HEK293T (cell line): ENCODE measurements at regions of chrX and their contacts with region 1.

Region 1: DNA sequence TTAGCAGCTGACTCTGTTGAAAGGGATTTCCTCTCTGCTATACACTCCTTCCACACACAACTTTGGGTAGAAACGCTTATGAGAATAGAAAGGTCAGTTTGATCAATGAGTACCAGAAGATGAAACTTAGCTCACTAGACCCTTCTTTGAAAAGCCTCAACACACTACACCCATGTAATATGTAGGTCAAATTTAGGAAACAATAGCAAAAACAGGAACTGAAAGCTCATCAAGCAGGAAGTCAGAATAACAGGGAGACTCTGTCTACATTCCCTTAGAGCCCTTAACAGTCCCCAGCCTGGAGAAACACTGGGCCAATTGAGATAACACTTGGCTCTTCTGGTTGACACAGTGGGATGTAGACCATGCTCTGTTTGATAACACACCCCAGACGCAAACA is 30.7 kb downstream of the SRPX2 start:
- DNase-seq: no peak

Region 2: DNA sequence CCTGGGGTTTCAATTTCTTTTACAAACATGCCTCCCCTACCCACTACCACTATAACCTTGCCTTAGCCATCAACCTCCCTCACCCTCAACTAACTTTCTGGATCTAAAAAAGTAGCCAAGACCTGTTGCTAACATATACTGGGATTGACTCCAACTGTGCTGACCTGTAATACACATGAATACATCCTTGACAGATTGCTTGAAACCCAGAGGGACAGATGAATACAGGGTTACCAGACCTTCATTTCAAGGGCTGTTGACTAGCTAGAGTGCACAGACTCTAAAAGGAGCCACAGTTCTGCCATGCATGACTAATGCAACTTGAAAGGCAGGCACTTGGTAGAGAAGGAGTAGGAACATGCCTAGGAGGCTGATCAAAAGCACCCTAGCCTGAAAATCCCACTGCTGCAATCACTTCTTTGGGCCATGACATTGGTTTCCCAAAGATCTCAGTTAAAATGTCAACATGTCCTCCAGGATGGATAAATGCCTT is 385.6 kb before region 1 on chrX:
- CTCF ChIA-PET with region 1: no interaction called
- POLR2A ChIA-PET with region 1: no interaction called
- DNase-seq: no peak

Region 3: DNA sequence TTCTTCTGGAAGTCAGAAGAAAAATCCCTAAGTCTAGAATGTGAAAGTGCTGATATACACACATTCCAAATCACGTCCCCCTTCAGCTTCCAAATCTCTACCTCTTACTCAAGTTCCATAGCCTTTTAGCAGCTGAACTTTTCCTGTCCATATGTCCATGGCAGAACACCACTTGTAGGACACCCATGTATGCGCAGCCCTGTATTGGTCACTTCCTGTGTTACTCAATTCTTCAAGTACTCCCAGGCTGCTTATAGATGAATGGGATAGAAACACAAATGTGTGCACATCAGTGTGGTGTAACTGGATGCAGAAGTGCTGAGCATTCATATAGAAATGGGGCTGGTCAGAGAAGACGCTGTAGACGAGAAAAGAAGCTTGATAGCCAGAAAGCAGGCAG is 11.9 kb before region 1 on chrX:
- CTCF ChIA-PET with region 1: interaction called, 11 read pairs
- POLR2A ChIA-PET with region 1: no interaction called
- DNase-seq: no peak

Region 4: DNA sequence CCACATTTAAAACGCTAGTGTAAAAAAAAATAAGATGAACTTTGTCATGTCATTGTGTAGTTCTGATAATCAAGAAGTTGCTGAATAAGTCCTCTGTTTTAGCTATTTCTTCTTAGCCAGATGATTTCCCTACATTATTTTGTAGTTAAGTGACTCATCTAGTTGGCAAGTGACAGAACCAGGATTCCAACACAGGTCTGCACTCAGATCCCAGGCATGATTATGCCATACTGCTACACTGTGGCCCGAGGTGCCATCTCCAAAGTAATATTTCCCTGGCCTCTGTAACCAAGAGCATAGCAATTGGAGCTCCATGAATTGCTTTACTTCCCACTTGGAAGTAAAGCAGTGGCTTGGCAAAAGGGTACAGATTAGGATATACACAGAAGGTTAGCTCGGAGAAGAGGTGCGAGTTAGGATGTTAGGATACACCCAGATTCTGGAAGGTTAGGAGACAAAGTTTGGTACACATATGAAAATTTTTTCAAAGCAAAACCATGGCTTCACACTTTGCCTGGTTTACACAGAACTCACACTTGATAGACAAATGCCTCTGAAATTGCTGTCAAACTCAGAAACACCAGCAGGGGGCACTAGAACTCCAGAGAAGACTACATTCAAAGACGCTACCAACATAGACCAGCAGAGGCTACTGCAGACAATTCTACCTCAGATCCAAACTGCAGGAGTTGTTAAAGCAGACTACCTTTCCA is 10.7 kb after region 1 on chrX:
- CTCF ChIA-PET with region 1: interaction called, 12 read pairs
- POLR2A ChIA-PET with region 1: no interaction called
- DNase-seq: peak; percentile 84

Region 5: DNA sequence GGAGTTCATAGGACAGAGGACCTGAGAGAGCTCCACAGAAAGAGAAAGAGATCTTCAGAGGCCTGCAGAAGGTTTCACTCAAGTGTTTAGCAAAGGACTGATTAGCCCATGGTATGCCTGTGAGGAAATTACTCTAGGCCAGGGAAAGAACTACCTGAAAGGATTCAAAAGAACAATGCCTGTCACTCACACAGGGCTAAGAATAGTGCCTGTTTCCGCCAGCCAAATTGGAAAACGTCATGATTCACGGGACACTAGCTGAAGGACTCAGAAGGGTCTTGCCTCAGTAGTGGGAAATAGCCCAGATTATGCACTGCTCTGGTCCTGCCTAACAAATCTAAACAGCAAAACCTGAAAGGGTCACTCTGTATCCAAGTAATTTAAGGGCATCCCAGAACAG is 36.1 kb after region 1 on chrX:
- CTCF ChIA-PET with region 1: no interaction called
- POLR2A ChIA-PET with region 1: no interaction called
- DNase-seq: no peak